Activated B cell treated with CpG ODN at 0.5 μM for 24 hours (primary cell): ENCODE measurements at regions of chr2 and their contacts with region 1.

Region 1: GRCh38 chr2:218876562-218877219 is 4.0 kb upstream of the WNT10A start:
- DNase-seq: peak; percentile 58
- ATAC-seq: no peak
- H3K4me3 Mint-ChIP-seq: no peak overlapping the region
- H3K27ac Mint-ChIP-seq: no peak overlapping the region
- H3K4me1 Mint-ChIP-seq: peaks cover 55% of the 10 kb centered on the region
- H3K27me3 Mint-ChIP-seq: peaks cover 19% of the 10 kb centered on the region
- CTCF ChIP-seq: peak; percentile 65

Region 2: DNA sequence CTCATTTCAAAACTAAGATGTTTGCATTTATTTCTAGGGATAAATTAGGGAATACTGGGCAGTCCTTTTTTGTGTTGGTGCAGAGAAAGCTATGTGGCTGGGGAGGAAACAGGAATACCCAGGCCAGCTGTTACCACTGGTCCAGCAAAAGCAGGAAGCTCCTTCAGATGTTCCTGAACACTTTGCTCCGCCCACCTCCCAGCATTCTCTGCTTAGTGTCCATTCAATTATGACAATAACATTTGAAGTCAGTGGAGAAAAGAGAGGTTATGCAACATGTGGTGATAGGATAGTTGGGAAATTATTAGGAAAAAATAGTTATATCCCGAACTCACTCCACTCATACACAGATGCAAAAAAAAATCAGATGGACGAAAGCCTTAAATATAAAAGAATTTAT is 681.8 kb before region 1 on chr2:
- CTCF ChIA-PET with region 1: no interaction called
- POLR2A ChIA-PET with region 1: no interaction called
- intact Hi-C with region 1: no loop called
- DNase-seq: no peak
- ATAC-seq: no peak
- H3K4me3 Mint-ChIP-seq: no peak overlapping the region
- H3K27ac Mint-ChIP-seq: no peak overlapping the region
- H3K4me1 Mint-ChIP-seq: no peaks in the 10 kb centered on the region
- H3K27me3 Mint-ChIP-seq: peaks cover 9% of the 10 kb centered on the region
- CTCF ChIP-seq: no peak

Region 3: DNA sequence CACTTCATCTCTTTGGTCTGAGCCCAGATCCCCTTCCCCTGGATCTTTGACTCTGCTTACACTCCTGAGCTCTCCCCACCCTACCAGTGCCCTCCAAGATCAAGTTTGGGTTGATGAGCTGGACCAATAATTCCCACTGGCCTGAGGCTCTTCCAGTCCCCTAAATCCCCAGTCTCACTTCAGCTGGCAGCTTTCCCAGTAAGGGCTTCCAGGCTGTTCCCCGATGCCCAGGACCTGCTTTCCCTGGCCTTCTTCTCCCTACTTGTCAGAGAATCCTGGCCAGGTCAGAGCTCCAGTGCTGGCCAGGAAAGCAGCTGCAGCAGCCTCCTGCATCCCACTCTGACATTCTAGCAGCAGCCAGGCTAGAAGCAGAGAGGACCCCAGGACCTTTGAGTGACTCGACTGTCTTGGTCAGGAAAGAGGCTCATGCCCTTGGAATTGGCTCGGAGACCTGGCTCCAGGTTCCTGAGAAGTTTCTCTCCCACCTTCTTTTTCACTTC is 13.6 kb before region 1 on chr2:
- CTCF ChIA-PET with region 1: interaction called, 10 read pairs
- POLR2A ChIA-PET with region 1: interaction called, 7 read pairs
- intact Hi-C with region 1: no loop called
- DNase-seq: no peak
- ATAC-seq: no peak
- H3K4me3 Mint-ChIP-seq: no peak overlapping the region
- H3K27ac Mint-ChIP-seq: no peak overlapping the region
- H3K4me1 Mint-ChIP-seq: peaks cover 19% of the 10 kb centered on the region
- H3K27me3 Mint-ChIP-seq: peaks cover 64% of the 10 kb centered on the region
- CTCF ChIP-seq: no peak

Region 4: DNA sequence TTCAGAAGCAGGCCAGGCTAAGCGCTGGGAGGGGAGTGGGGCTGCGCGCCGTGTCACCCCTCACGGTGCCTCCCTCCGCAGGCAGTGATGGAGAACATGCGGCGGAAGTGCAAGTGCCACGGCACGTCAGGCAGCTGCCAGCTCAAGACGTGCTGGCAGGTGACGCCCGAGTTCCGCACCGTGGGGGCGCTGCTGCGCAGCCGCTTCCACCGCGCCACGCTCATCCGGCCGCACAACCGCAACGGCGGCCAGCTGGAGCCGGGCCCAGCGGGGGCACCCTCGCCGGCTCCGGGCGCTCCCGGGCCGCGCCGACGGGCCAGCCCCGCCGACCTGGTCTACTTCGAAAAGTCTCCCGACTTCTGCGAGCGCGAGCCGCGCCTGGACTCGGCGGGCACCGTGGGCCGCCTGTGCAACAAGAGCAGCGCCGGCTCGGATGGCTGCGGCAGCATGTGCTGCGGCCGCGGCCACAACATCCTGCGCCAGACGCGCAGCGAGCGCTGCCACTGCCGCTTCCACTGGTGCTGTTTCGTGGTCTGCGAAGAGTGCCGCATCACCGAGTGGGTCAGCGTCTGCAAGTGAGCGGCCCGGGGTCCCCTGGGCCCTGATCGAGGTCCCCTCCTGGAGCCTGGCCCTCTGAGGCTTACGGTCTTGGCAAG is 16.1 kb after region 1 on chr2:
- CTCF ChIA-PET with region 1: interaction called, 1,062 read pairs
- POLR2A ChIA-PET with region 1: interaction called, 969 read pairs
- intact Hi-C with region 1: loop called (anchors 1 kb)
- DNase-seq: peak; percentile 91
- ATAC-seq: peak; percentile 66
- H3K4me3 Mint-ChIP-seq: peak overlapping the region; percentile 80
- H3K27ac Mint-ChIP-seq: peak overlapping the region; percentile 92
- H3K4me1 Mint-ChIP-seq: peaks cover 59% of the 10 kb centered on the region
- H3K27me3 Mint-ChIP-seq: no peaks in the 10 kb centered on the region
- CTCF ChIP-seq: no peak

Region 5: GRCh38 chr2:218898109-218898878 is 21.6 kb after region 1 on chr2:
- CTCF ChIA-PET with region 1: interaction called, 1,062 read pairs
- POLR2A ChIA-PET with region 1: interaction called, 969 read pairs
- intact Hi-C with region 1: loop called (anchors 1 kb)
- DNase-seq: peak; percentile 88
- ATAC-seq: peak; percentile 22
- H3K4me3 Mint-ChIP-seq: peak overlapping the region; percentile 85
- H3K27ac Mint-ChIP-seq: peak overlapping the region; percentile 84
- H3K4me1 Mint-ChIP-seq: peaks cover 47% of the 10 kb centered on the region
- H3K27me3 Mint-ChIP-seq: peaks cover 22% of the 10 kb centered on the region
- CTCF ChIP-seq: peak; percentile 97

Region 6: GRCh38 chr2:218959141-218959731 is 82.5 kb after region 1 on chr2 and contains the start of gene CDK5R2:
- CTCF ChIA-PET with region 1: interaction called, 6 read pairs
- POLR2A ChIA-PET with region 1: no interaction called
- intact Hi-C with region 1: loop called (anchors 1 kb)
- DNase-seq: peak; percentile 66
- ATAC-seq: peak; percentile 99
- H3K4me3 Mint-ChIP-seq: peak within 1 kb of the TSS; percentile 69
- H3K27ac Mint-ChIP-seq: no peak within 1 kb of the TSS
- H3K4me1 Mint-ChIP-seq: peaks cover 15% of the 10 kb centered on the region
- H3K27me3 Mint-ChIP-seq: peaks cover 55% of the 10 kb centered on the region
- CTCF ChIP-seq: no peak
- total RNA-seq, gene CDK5R2: 0.07 TPM in 1 of 2 replicates, not detected in the other

Region 7: DNA sequence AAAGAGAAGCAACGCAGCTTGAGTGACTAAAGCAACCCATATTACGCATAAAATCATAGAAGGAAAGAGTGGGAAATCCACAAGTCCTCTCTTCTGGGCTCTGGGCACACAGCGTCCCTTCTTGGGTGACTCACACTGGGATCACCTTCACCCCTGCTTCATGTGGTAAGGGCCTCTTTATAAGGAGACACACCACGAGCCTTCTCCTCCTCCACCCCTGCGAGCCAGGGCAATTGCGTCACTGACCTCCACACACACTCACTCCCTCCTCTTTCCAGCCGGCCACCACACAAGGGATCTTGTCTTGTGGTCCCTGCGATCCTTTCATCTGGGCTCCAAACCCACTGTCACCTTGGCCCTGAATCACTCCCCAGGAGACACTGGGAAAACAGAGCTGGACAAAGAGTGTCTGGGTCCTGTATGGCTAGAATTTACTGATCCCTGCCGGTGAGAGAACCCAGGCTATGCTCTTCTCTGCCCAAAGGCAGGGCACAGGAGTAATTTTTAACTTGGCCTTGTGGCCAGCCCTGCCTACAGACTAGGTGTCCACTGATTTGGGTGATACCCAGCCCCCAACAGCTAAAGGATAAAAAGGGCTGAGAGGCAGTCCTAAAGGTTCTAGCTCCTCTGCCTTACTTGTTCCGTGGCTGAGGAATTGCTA is 248.7 kb after region 1 on chr2:
- CTCF ChIA-PET with region 1: no interaction called
- POLR2A ChIA-PET with region 1: no interaction called
- intact Hi-C with region 1: no loop called
- DNase-seq: no peak
- ATAC-seq: no peak
- H3K4me3 Mint-ChIP-seq: no peak overlapping the region
- H3K27ac Mint-ChIP-seq: no peak overlapping the region
- H3K4me1 Mint-ChIP-seq: no peaks in the 10 kb centered on the region
- H3K27me3 Mint-ChIP-seq: no peaks in the 10 kb centered on the region
- CTCF ChIP-seq: no peak